GM13976 (cell line): ENCODE measurements at regions of chr10 and their contacts with region 1.

Region 1: DNA sequence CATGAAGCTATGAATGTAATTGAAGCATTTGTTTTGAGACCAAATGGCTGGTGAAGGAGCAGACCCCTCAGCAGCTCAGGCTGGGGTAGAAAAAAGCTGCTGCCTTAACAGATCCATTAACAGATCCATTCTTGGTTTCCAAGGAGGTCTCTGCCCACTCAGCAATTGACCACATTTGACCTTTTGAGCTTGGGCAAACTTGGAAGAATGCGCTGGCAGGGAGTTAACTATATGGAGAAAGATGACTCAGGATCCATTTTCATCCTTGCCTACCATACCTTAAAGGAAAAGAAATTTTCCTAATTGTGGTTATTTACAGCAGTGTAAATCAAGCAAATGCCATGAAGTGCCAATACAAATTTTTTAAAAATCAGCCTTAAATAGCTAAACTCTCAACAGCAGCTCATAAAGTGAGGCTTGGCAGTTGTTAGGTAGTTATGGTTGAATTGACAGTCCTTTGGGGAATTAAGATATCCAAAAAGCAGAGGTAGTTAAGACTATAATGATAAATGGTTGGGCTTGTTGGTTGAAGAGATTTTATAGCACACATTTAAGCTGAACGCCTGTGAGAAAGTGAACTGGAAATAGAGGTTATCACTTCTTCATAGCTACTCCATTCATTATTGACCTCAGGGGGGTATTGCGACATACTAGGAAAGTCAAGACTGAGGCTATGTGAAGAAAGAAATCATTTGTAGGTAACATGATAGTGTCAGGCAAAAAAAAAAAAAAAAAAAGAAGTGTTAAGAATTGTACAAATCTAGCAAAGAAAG is 83.9 kb downstream of the MKX start:
- DNase-seq: no peak
- CTCF ChIP-seq: no peak

Region 2: GRCh38 chr10:27446091-27446918 is 215.4 kb before region 1 on chr10:
- in situ Hi-C with region 1: loop called (anchors 25 kb)
- DNase-seq: peak; percentile 8
- CTCF ChIP-seq: no peak